ENCODE measurements at regions of chr19 and their contacts with region 1.

Region 1: GRCh38 chr19:44839276-44839675 is 6.8 kb upstream of the NECTIN2 start:
- DNase-seq: no peak
- H3K4me3 ChIP-seq: no peak overlapping the region
- CTCF ChIP-seq: no peak
- POLR2A ChIP-seq: no peak

Region 2: DNA sequence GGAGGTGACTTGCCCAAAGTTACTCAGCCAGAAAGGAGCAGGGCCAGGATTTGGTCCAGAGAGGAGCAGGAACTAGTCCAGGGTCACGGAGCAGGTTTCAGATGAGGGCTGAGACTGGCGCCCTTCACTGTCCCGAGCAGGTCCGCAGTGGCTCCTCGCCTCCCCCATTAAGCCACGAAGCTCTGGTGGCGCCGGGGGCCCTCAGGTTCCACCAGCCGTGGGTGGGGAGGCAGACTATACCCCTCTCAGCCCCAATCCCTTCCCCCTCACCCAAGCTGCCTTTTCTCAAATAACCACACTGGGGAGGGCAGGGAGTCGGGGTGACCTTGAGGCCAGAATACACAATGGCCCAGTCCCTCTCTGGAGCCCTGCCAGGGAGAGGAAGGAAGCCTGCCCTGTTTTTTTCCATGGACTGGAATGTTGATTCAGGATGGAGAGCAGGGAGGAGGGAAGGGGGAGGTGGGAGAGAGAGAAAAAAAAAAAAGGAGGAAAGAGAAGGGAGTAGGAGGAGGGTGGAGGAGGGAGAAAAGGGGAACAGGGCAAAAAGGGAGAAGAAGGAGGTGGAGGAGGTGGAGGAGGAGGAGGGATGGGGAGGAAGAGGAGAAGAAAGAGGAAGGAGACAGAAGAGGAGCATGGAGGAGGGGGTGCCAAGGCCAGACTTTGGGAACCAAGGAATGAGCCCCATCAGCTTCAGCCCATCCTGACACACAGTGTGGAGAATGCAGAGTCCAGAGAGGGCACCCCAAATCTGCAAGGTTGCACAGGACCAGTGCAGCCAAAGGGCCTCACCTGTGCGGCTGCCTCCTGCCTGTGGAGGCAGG is 120.6 kb before region 1 on chr19:
- intact Hi-C with region 1: loop called (anchors 5 kb)
- DNase-seq: no peak
- H3K4me3 ChIP-seq: no peak overlapping the region
- CTCF ChIP-seq: no peak
- POLR2A ChIP-seq: no peak

Measured in lower leg skin (tissue), 4 donors.